ENCODE measurements at regions of chr1 and their contacts with region 1.

Region 1: DNA sequence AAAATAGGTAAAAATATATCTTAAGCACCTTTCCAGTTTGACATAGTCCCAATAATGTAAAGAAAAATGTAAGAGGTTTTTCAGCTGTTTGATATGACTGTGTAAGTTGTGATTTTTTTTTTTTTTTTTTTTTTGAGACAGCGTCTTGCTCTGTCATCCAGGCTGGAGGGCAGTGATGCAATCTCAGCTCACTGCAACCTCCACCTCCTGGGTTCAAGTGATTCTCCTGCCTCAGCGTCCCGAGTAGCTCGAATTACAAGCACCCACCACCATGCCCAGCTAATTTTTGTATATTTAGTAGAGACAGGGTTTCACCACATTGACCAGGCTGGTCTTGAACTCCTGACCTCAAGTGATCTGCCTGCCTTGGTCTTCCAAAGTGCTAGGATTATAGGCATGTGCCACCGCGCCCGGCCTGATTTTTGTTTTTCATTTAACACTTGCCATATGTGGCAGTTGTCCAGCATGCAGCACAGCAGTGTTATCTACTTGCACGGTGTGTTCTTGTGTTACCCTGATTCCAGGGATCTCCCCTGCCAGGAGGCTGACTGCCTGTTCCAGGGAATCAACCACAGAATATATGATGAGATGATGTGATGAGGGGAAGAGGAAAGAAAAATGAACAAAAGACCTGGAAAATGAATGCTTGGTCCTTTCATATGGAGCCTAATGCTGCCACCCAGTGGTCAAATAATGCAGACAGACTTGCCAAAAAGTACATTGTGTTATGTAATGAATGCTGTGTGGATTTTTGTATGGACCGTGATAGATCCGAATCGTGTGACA is 79.0 kb downstream of the RAVER2 start:
- DNase-seq: no peak

Region 2: DNA sequence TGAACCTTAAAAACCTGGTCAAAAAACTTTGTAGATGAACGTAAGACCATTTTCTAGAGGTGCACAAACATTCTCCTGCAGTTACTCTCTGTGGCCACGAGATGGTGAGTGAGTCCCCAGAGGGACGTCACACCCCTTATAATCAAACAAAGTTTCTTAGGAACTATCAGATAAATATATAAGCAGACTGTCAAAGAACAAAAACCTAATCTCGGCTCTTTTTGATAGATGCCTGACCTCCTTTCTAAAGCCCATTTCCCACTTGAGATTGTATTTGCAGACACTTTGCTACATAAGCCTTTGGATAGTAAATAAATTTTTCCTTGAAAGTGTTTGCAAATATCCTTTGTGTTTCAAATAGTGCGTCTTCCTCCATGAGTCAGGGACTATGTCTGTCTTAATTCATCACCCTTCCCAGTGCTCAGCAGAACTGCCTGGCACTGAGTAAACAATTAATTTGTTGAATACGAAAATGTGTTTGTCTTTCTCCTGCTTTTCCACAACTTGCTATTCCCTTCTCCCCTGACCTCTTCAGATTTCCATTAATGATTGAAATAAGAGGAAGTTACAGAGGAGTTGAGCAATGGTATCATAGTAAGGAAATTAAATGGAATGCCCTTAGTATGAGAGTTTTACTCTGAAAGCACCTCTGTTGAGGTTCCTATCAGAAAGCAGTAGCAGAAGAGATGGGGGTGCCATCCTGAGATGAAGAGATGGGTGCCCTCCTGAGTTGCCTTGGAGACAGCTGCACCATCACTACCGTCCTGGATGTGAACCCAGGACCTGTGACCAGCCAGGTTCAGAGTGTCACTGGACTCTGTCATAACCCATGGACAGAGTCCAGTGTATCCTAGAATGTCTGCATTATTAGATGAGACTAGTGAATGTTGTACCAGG is 136.8 kb before region 1 on chr1:
- intact Hi-C with region 1: loop called (anchors 1 kb)
- DNase-seq: no peak

Region 3: GRCh38 chr1:64744492-64745180 is 79.2 kb before region 1 on chr1 and contains the start of gene RAVER2:
- intact Hi-C with region 1: loop called (anchors 5 kb)
- DNase-seq: peak; percentile 87
- total RNA-seq, gene RAVER2: 12.2 TPM

Region 4: DNA sequence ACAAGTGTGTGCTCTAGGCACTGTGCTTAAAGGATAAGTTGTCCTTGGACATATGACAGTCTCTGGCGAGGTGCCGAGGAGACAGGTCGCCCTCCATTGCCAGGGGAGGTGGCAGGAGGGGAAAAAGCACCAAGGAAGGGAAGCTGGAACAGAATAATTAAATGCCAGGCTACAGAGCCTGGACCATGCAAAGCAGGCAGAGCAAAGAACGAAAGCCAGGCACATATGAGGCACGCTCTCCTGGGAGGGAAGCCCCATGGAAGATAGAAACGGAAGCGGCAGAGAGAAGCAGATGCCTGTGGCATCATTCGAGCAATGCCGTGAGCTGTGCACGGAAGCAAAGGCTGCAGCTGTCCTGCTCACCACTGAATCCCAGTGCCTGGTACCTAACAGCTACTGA is 51.2 kb after region 1 on chr1:
- intact Hi-C with region 1: no loop called
- DNase-seq: no peak